A549 (cell line): ENCODE measurements at regions of chr17 and their contacts with region 1.

Region 1: GRCh38 chr17:48871551-48872351 is 20.8 kb upstream of the ATP5MC1 start:
- DNase-seq: peak; percentile 85 to 93
- ATAC-seq: peak; percentile 88 to 94
- H3K4me3 ChIP-seq: no peak overlapping the region
- H3K27ac ChIP-seq: peak overlapping the region; percentile 90 to 94
- H3K4me1 ChIP-seq: peaks cover 58% of the 10 kb centered on the region
- CTCF ChIP-seq: no peak
- EP300 ChIP-seq: no peak; a peak in 1 of 5 replicates
- POLR2A ChIP-seq: no peak
- RAD21 ChIP-seq: peak; percentile 28 to 30; a peak in 2 of 5 replicates

Region 2: GRCh38 chr17:48860034-48860433 is 11.7 kb before region 1 on chr17:
- CTCF ChIA-PET with region 1: interaction called, 215 read pairs
- POLR2A ChIA-PET with region 1: no interaction called
- DNase-seq: peak in 1 of 2 experiments; percentile 41
- ATAC-seq: peak; percentile 47 to 71; a peak in 4 of 6 replicates
- H3K4me3 ChIP-seq: no peak overlapping the region
- H3K27ac ChIP-seq: no peak overlapping the region
- H3K4me1 ChIP-seq: no peaks in the 10 kb centered on the region
- CTCF ChIP-seq: no peak
- EP300 ChIP-seq: no peak
- POLR2A ChIP-seq: no peak
- RAD21 ChIP-seq: no peak

Region 3: DNA sequence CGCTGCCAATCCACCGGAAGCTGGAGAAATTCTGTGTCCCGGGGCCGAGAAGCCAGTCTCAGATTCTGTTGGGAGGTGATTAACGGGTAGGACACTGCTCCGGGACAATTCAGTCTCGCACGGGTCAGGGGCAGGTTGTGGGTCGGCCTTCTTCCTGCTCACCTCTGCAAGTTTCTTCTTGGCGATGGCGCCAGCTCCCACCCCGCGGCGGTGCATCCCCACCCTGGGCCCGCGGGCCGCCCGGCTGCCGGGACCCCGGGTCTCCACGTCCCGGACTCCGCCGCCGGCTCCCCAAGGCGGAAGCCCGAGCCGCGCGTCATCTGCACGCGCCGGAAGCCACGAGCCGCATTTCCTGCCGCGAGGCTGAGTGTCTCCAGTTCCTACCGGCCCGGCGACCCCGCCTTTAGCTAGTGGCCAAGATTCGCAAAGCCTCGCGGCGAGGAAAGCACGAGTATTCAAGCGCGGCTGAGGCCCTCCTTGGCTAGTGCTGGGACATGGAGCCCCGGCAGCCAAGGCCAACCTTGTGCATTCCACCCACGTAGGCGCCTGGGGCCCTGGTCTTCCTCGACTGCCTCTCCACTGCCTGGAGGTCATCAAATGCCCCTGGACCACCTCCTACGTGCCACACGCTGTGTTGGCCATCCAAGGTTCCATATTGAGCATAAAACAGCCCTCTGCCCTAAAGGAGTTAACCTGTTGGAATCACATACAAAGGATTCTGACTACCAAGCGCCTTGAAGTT is 72.9 kb after region 1 on chr17 and contains the start of gene SNF8:
- CTCF ChIA-PET with region 1: no interaction called
- POLR2A ChIA-PET with region 1: no interaction called
- DNase-seq: peak; percentile 95 to 99
- ATAC-seq: peak; percentile 95 to 98
- H3K4me3 ChIP-seq: peak within 1 kb of the TSS; percentile 60
- H3K27ac ChIP-seq: peak within 1 kb of the TSS; percentile 86 to 92
- H3K4me1 ChIP-seq: peaks cover 19% of the 10 kb centered on the region; the same call in 2 of the 3 replicates
- CTCF ChIP-seq: no peak
- EP300 ChIP-seq: no peak
- POLR2A ChIP-seq: peak; percentile 72
- RAD21 ChIP-seq: peak in 1 of 2 experiments; percentile 50; a peak in 4 of 5 replicates
- polyA plus RNA-seq, gene SNF8: 187 and 209 TPM in 2 replicates